Left lung (tissue), 14 donors: ENCODE measurements at regions of chr3 and their contacts with region 1.

Region 1: GRCh38 chr3:44913868-44914468 is 39.6 kb downstream of the TGM4 start:
- DNase-seq: peak in 3 of 4 donors; percentile 11 to 64 (median 64)
- ATAC-seq: peak; percentile 93
- H3K4me3 ChIP-seq: no peak overlapping the region
- H3K27ac ChIP-seq: no peak overlapping the region
- H3K4me1 ChIP-seq: peaks cover 0 to 7% of the 10 kb centered on the region in 2 donors
- H3K27me3 ChIP-seq: peaks cover 0 to 12% of the 10 kb centered on the region in 2 donors
- CTCF ChIP-seq: peak; percentile 70 to 81

Region 2: GRCh38 chr3:44529927-44530326 is 384.0 kb before region 1 on chr3:
- intact Hi-C with region 1: loop called in 1 of 2 experiments (anchors 10 kb)
- DNase-seq: no peak
- ATAC-seq: peak; percentile 32
- H3K4me3 ChIP-seq: no peak overlapping the region
- H3K27ac ChIP-seq: no peak overlapping the region
- H3K4me1 ChIP-seq: no peaks in the 10 kb centered on the region
- H3K27me3 ChIP-seq: peaks cover 0 to 22% of the 10 kb centered on the region in 2 donors
- CTCF ChIP-seq: no peak

Region 3: GRCh38 chr3:44795197-44795596 is 118.8 kb before region 1 on chr3:
- intact Hi-C with region 1: no loop called
- DNase-seq: no peak
- ATAC-seq: no peak
- H3K4me3 ChIP-seq: no peak overlapping the region
- H3K27ac ChIP-seq: no peak overlapping the region
- H3K4me1 ChIP-seq: no peaks in the 10 kb centered on the region
- H3K27me3 ChIP-seq: no peaks in the 10 kb centered on the region
- CTCF ChIP-seq: no peak